Activated CD4-positive, alpha-beta T cell treated with anti-CD3 and anti-CD28 coated beads, Interleukin-2, amount 10 ng/mL, durations not matched to agents 24 days and 14 days (primary cell): ENCODE measurements at regions of chr16 and their contacts with region 1.

Region 1: DNA sequence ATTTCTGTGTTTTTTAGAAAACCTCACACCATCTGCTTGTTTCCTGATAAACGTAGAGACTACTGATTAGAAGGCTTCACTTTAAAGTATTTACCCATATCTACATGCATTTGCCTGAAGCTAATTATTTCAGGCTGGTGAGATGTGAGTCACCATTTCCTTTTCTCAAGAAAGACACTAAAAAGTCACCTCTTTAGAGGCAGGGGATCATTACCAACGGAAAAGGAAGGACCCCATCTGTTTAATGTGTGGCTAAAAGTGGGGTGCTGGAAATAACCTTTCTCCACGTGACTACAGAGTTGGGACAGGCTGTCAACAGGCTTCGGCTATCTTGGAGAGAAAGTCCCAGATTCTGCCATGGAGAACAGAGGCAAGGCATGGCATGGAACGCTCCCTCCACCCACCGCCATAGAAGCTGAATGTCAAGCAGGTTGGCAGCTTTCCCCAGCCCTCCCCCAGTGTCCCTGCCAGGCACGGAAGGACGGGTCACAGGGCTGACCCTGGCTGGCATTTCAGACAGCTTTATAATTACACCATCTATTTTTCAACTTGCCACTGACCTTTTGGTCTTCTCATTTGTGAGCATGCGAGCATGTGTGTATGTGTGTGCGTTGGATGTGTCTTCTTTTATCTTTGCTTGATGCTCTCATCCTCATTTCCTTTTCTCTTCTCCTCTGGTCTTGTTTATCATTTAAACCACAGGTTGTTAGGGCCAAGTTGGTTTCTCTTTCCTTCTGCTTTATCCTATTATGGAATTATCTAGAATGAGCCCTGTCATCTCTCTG is 157.0 kb downstream of the CPPED1 start:
- DNase-seq: peak; percentile 82
- H3K4me3 Mint-ChIP-seq: peak overlapping the region; percentile 71
- H3K27ac Mint-ChIP-seq: peak overlapping the region; percentile 98
- H3K4me1 Mint-ChIP-seq: peaks cover 22% of the 10 kb centered on the region
- H3K27me3 Mint-ChIP-seq: peaks cover 5% of the 10 kb centered on the region

Region 2: GRCh38 chr16:12613131-12613991 is 33.3 kb before region 1 on chr16:
- intact Hi-C with region 1: loop called (anchors 2 kb)
- DNase-seq: no peak
- H3K4me3 Mint-ChIP-seq: peak overlapping the region; percentile 21
- H3K27ac Mint-ChIP-seq: peak overlapping the region; percentile 76
- H3K4me1 Mint-ChIP-seq: peaks cover 21% of the 10 kb centered on the region
- H3K27me3 Mint-ChIP-seq: peaks cover 2% of the 10 kb centered on the region

Region 3: GRCh38 chr16:12750554-12750918 is 103.9 kb after region 1 on chr16:
- intact Hi-C with region 1: loop called (anchors 2 kb)
- DNase-seq: peak; percentile 56
- H3K4me3 Mint-ChIP-seq: peak overlapping the region; percentile 50
- H3K27ac Mint-ChIP-seq: peak overlapping the region; percentile 87
- H3K4me1 Mint-ChIP-seq: peaks cover 26% of the 10 kb centered on the region
- H3K27me3 Mint-ChIP-seq: no peaks in the 10 kb centered on the region